ENCODE measurements at regions of chr20 and their contacts with region 1.

Region 1: GRCh38 chr20:59222253-59223181 is 58.9 kb downstream of the ZNF831 start:
- DNase-seq: peak; percentile 3
- H3K4me3 ChIP-seq: peak overlapping the region; percentile 49
- H3K27me3 ChIP-seq: peaks cover 17% of the 10 kb centered on the region
- CTCF ChIP-seq: peak; percentile 88

Region 2: DNA sequence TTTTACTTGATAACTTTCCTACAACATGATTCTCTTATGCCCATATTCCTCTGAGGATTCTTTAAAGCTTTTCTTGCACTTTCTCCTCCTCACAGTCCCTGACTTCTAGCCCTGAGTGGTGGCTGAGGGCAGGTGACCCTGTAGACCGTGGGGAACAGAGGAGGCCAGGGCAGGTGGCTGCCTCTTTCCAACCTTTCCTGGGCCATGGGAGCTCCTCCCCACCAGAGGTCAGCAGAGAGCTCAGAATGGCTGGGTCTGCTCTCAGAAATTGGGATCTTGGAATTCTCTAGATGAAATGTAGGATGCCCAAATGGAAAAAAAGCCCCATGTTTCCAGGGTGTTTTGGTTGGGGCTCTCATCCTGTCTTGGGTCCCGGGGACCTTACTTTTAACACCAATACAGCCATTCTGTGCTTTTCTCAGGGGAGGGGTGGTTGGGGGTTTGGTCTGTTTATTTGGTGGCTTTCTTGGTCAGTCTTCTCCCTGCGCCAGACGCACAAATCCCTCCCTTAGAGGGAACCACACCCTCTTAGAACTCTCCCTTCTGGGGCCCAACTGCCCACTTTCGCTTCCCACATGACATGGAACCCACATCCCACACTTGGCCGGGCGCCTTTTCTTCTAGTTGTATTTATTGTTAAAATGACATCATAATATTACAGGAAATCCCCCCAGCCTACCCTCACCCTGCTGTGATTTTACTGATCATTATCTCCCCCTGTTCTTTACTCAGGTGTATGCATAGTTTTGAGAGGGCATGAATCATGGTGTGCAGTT is 352.1 kb before region 1 on chr20:
- CTCF ChIA-PET with region 1: interaction called, 31 read pairs
- POLR2A ChIA-PET with region 1: no interaction called
- DNase-seq: no peak
- H3K4me3 ChIP-seq: no peak overlapping the region
- H3K27me3 ChIP-seq: peaks cover 13% of the 10 kb centered on the region
- CTCF ChIP-seq: peak; percentile 95

Region 3: GRCh38 chr20:59087829-59088433 is 134.6 kb before region 1 on chr20:
- CTCF ChIA-PET with region 1: interaction called, 10 read pairs
- POLR2A ChIA-PET with region 1: no interaction called
- DNase-seq: no peak
- H3K4me3 ChIP-seq: no peak overlapping the region
- H3K27me3 ChIP-seq: peaks cover 2% of the 10 kb centered on the region; the same call in 1 of the 2 replicates
- CTCF ChIP-seq: peak; percentile 88

Region 4: DNA sequence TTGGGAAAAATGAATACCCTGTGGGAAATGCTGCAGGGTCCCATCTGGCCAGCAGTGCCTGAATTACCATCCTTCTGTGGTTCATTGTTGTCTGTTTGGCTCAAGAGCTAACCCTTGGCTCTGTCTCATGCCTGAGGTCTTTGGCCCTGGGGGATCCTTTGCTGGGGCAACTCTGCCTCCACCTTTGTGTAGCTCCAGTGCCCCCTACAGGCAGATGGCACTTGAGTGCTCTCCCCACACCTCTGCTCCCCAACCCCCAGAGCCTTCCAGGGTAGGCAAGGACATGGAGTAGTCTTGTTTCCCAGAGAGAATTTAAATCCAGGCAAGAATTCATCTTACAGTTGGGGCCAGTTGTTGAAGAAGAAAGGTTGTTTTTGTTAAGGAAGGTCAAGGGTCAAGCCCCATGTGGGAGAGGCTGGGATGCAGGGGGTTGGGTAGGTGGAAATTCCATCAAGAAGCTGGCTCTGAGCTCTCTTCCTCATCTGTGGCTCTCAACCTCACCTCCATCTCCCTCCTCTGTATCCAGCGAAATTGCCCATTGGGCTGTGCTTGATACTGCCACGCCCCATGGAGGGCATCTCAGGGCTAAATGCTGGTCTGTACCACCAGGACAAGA is 14.7 kb before region 1 on chr20:
- CTCF ChIA-PET with region 1: interaction called, 21 read pairs
- POLR2A ChIA-PET with region 1: interaction called, 6 read pairs
- DNase-seq: no peak
- H3K4me3 ChIP-seq: no peak overlapping the region
- H3K27me3 ChIP-seq: peaks cover 6% of the 10 kb centered on the region; the same call in 1 of the 2 replicates
- CTCF ChIP-seq: peak; percentile 46; the same call in 1 of the 2 replicates

Region 5: GRCh38 chr20:59232618-59233017 is 10.1 kb after region 1 on chr20:
- CTCF ChIA-PET with region 1: interaction called, 10 read pairs
- POLR2A ChIA-PET with region 1: no interaction called
- DNase-seq: no peak
- H3K4me3 ChIP-seq: no peak overlapping the region
- H3K27me3 ChIP-seq: no peaks in the 10 kb centered on the region
- CTCF ChIP-seq: no peak